ENCODE measurements at regions of chr19 and their contacts with region 1.

Region 1: DNA sequence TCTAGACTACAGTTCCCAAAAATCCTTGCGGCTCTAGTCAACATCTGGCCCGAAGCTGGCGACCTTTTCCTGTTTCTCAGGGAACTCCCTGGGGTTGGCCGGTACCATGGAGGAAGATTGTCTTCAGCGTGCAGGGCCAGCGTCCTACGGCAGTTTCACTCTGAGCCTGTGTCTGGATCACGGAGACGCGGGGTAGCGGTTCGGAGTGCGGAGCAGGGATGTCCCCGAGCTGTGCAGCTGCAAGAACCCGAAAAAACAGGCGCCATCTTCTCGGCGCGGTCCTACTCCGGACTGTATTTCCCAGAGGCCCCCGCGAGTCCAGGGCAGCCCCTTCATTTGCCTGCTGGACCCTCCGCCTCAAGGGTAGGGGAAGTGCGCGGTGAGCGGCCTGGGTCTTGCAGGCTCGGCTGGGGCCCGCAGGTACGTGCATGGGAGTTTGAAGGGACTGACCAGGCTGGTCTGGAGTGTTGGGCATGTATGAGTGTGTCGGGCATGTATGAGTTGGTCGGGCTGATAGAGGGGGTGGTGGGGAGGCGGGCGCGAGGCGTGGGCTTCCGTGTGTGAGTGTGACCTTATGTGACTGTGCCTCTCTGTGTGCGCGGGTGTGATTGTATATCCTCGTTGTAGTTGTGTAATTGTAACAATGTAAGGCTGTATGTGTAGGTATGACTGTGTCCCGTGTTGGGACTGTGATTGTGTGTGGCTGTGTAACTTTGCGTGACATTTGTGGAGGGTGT is at the start of gene ZNF383:
- DNase-seq: peak; percentile 87 to 91
- ATAC-seq: peak; percentile 97 to 99 (median 98)
- H3K4me3 ChIP-seq: peak within 1 kb of the TSS; percentile 61 to 85 (median 74)
- H3K27ac ChIP-seq: peak within 1 kb of the TSS; percentile 88 to 97 (median 93)
- H3K4me1 ChIP-seq: peaks cover 0 to 23% (median 13%) of the 10 kb centered on the region in 9 donors
- H3K27me3 ChIP-seq: no peaks in the 10 kb centered on the region
- CTCF ChIP-seq: peak in 1 of 9 donors; percentile 6
- total RNA-seq, gene ZNF383: 8.1 to 12.7 (median 9.1) TPM

Region 2: DNA sequence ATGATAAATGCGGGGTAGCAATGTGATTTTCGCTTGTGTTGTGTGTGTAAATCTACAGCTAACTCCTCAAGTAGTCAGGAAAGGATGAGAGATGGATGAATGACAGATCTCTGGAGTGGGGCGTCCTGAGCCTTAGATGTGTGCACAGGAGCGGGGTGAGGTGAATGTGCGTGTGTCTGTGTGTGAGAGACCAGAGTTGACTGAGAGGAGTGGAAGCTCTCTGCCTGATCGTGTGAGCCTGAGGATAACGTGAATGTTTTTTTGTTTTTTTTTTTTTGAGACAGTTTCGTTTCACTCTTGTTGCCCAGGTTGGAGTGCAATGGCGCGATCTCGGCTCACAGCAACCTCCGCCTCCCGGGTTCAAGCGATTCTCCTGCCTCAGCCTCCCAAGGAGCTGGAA is 552.2 kb before region 1 on chr19:
- intact Hi-C with region 1: no loop called
- DNase-seq: no peak
- ATAC-seq: no peak
- H3K4me3 ChIP-seq: peak overlapping the region in 9 of 10 donors; percentile 65 to 89 (median 82)
- H3K27ac ChIP-seq: peak overlapping the region in 1 of 10 donors; percentile 88
- H3K4me1 ChIP-seq: peaks cover 0 to 23% (median 16%) of the 10 kb centered on the region in 9 donors
- H3K27me3 ChIP-seq: no peaks in the 10 kb centered on the region
- CTCF ChIP-seq: no peak

Region 3: DNA sequence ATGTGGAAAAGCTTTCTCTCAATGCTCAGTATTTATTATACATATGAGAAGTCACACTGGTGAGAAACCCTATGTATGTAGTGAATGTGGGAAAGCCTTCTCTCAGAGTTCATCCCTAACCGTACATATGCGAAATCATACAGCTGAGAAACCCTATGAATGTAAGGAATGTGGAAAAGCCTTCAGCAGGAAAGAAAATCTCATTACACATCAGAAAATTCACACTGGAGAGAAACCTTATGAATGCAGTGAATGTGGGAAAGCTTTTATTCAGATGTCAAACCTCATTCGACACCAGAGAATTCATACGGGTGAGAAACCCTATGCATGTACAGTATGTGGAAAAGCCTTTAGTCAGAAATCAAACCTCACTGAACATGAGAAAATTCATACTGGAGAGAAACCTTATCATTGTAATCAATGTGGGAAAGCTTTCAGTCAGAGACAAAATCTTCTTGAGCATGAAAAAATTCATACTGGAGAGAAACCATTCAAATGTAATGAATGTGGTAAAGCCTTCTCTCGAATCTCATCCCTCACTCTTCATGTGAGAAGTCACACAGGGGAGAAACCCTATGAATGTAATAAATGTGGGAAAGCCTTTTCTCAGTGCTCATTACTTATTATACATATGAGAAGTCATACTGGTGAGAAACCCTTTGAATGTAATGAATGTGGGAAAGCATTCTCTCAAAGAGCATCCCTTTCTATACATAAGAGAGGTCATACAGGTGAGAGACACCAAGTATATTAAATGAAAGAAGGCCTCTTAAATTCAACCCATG is 267.5 kb before region 1 on chr19:
- intact Hi-C with region 1: no loop called
- DNase-seq: no peak
- ATAC-seq: no peak
- H3K4me3 ChIP-seq: no peak overlapping the region
- H3K27ac ChIP-seq: no peak overlapping the region
- H3K4me1 ChIP-seq: no peaks in the 10 kb centered on the region
- H3K27me3 ChIP-seq: no peaks in the 10 kb centered on the region
- CTCF ChIP-seq: no peak

Region 4: GRCh38 chr19:36973021-36973843 is 244.8 kb before region 1 on chr19:
- intact Hi-C with region 1: loop called in 6 of 10 experiments (anchors 5 to 10 kb)
- DNase-seq: peak; percentile 89
- ATAC-seq: peak; percentile 97 to 100 (median 100)
- H3K4me3 ChIP-seq: peak overlapping the region; percentile 48 to 92 (median 74)
- H3K27ac ChIP-seq: peak overlapping the region; percentile 59 to 91 (median 74)
- H3K4me1 ChIP-seq: peaks cover 5 to 19% (median 14%) of the 10 kb centered on the region in 9 donors
- H3K27me3 ChIP-seq: no peaks in the 10 kb centered on the region
- CTCF ChIP-seq: peak; percentile 74 to 98 (median 94)

Region 5: DNA sequence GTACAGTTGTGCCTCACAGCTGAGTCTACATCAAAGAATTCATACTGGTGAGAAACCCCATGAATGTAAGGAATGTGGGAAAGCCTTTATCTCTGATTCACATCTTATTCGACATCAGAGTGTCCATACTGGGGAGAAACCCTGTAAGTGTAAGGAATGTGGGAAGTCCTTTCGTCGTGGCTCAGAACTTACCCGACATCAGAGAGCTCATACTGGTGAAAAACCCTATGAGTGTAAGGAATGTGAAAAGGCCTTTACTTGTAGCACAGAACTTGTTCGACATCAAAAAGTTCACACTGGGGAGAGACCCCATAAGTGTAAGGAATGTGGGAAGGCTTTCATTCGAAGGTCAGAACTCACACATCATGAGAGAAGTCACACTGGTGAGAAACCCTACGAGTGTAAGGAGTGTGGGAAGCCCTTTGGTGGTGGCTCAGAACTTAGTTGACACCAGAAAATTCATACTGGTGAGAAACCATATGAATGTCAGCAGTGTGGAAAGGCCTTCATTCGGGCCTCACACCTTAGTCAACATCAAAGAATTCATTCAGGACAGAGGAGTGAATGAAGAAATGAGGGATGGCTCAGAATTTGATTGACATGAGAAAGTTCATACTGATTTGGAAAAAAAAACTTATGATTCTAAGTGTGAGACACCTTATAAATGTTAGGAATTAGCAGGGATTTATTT is 220.7 kb before region 1 on chr19:
- intact Hi-C with region 1: no loop called
- DNase-seq: no peak
- ATAC-seq: no peak
- H3K4me3 ChIP-seq: no peak overlapping the region
- H3K27ac ChIP-seq: no peak overlapping the region
- H3K4me1 ChIP-seq: no peaks in the 10 kb centered on the region
- H3K27me3 ChIP-seq: no peaks in the 10 kb centered on the region
- CTCF ChIP-seq: no peak

Region 6: GRCh38 chr19:37172368-37173366 is 45.4 kb before region 1 on chr19 and contains the start of gene ZNF585A:
- intact Hi-C with region 1: loop called in 5 of 10 experiments (anchors 1 to 5 kb)
- DNase-seq: peak; percentile 86 to 95
- ATAC-seq: peak; percentile 100
- H3K4me3 ChIP-seq: peak within 1 kb of the TSS; percentile 45 to 78 (median 62)
- H3K27ac ChIP-seq: peak within 1 kb of the TSS in 9 of 10 donors; percentile 47 to 82 (median 66)
- H3K4me1 ChIP-seq: peaks cover 0 to 11% (median 6%) of the 10 kb centered on the region in 9 donors
- H3K27me3 ChIP-seq: no peaks in the 10 kb centered on the region
- CTCF ChIP-seq: peak in 6 of 9 donors; percentile 26 to 57 (median 39)
- total RNA-seq, gene ZNF585A: 7.1 to 17.0 (median 13.0) TPM

Region 7: DNA sequence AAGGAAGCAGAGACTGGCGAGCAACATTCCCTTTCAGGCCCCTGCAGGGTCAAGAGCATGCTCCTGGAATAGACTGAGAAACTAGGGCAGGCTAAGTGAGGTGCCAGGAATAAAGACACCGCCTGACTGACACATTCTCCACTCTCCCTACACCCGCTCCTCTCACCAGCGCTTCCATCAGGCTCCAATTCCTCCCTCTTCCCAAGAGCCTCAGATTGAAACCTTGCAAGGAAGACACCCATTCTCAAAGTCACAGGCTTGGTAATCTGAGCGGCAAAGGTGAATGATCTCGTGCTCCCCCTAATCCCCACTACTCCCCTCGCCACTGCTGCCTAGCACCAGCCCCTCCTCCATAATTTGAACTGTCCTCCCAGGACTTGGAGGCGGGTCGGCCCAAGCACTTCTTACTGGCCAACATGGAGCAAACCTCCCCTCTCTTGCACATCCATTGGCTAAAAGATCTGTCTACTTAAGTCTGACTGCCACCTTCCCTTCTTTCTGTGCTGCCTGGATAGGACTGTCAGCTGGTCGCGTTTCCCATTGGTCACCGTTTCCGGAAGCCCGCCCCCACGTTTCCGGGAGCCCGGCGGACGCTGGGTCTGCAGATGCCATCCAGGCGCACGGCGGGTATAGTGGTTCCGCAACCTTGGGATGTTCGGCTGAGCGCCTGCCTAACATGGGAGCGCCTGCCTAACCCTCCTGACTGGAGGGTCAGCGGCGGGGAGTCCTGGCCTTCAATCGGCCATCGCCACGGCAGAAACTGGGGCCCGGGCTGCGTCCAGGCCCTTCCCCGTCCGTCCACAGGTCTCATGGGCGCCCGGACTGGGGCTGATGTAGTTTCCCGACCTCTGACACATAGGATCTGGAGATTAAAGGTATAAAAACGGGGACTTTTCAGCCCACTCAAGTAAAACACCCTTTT is 33.5 kb after region 1 on chr19:
- intact Hi-C with region 1: no loop called
- DNase-seq: peak; percentile 85 to 94
- ATAC-seq: peak; percentile 97 to 100 (median 99)
- H3K4me3 ChIP-seq: peak overlapping the region; percentile 57 to 81 (median 69)
- H3K27ac ChIP-seq: peak overlapping the region; percentile 39 to 90 (median 79)
- H3K4me1 ChIP-seq: peaks cover 0 to 18% (median 4%) of the 10 kb centered on the region in 9 donors
- H3K27me3 ChIP-seq: no peaks in the 10 kb centered on the region
- CTCF ChIP-seq: no peak

Region 8: GRCh38 chr19:37334179-37335071 is 116.4 kb after region 1 on chr19:
- intact Hi-C with region 1: loop called in 1 of 10 experiments (anchors 10 kb)
- DNase-seq: peak; percentile 90 to 95
- ATAC-seq: peak; percentile 97 to 99 (median 99)
- H3K4me3 ChIP-seq: peak overlapping the region; percentile 58 to 98 (median 78)
- H3K27ac ChIP-seq: peak overlapping the region; percentile 5 to 94 (median 88)
- H3K4me1 ChIP-seq: peaks cover 2 to 51% (median 27%) of the 10 kb centered on the region in 9 donors
- H3K27me3 ChIP-seq: no peaks in the 10 kb centered on the region
- CTCF ChIP-seq: no peak

Region 9: GRCh38 chr19:37506387-37507166 is 288.6 kb after region 1 on chr19 and contains the start of gene ZNF793:
- intact Hi-C with region 1: loop called in 1 of 10 experiments (anchors 5 kb)
- DNase-seq: peak; percentile 84 to 88
- ATAC-seq: peak; percentile 91 to 96 (median 94)
- H3K4me3 ChIP-seq: peak within 1 kb of the TSS; percentile 61 to 97 (median 73)
- H3K27ac ChIP-seq: peak within 1 kb of the TSS; percentile 90 to 98 (median 94)
- H3K4me1 ChIP-seq: peaks cover 0 to 22% (median 14%) of the 10 kb centered on the region in 9 donors
- H3K27me3 ChIP-seq: no peaks in the 10 kb centered on the region
- CTCF ChIP-seq: no peak
- total RNA-seq, gene ZNF793: 4.7 to 9.6 (median 6.9) TPM

Measured in heart right ventricle (tissue), 16 donors.